Lower leg skin (tissue), 4 donors: ENCODE measurements at regions of chr20 and their contacts with region 1.

Region 1: GRCh38 chr20:18270243-18270642 is 18.1 kb upstream of the ZNF133 start:
- DNase-seq: no peak
- H3K4me3 ChIP-seq: no peak overlapping the region
- CTCF ChIP-seq: no peak
- POLR2A ChIP-seq: no peak

Region 2: GRCh38 chr20:18066421-18067336 is 203.6 kb before region 1 on chr20:
- intact Hi-C with region 1: no loop called
- DNase-seq: peak in 1 of 2 donors; percentile 60
- H3K4me3 ChIP-seq: no peak overlapping the region
- CTCF ChIP-seq: no peak
- POLR2A ChIP-seq: no peak

Region 3: GRCh38 chr20:18225632-18226031 is 44.6 kb before region 1 on chr20:
- intact Hi-C with region 1: loop called (anchors 2 kb)
- DNase-seq: no peak
- H3K4me3 ChIP-seq: no peak overlapping the region
- CTCF ChIP-seq: no peak
- POLR2A ChIP-seq: no peak